MCF 10A (cell line): ENCODE measurements at regions of chr15 and their contacts with region 1.

Region 1: DNA sequence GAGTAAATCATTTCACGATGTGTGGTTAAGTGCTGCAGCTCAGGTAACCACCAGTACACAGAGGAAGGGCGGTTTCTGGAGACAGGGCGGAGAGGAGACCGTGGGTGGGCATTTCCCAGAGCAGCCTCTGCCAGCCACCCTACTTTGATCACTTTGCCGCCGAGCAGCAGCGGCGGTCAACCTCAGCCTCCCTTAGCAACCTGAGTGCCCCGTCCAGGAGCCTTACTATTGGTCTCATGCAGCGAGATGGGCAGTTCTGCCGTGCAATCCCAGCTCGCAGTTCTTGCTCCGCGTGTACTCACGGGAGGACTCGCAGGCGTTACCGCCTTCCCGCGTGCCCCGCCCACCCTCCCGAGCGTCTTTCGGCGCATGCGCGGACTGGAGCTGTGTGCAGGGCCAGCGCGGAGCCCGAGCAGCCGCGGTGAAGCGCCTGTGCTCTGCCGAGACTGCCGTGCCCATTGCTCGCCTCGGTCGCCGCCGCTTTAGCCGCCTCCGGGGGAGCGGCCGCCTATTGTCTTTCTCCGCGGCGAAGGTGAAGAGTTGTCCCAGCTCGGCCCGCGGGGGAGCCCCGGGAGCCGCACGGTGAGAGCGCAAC is at the start of gene AKAP13:
- DNase-seq: peak; percentile 99
- H3K4me3 Mint-ChIP-seq: peak within 1 kb of the TSS; percentile 79
- H3K27ac Mint-ChIP-seq: peak within 1 kb of the TSS; percentile 79
- H3K4me1 Mint-ChIP-seq: peaks cover 35% of the 10 kb centered on the region
- H3K27me3 Mint-ChIP-seq: no peaks in the 10 kb centered on the region
- CTCF ChIP-seq: no peak
- total RNA-seq, gene AKAP13: 65.7 and 92.9 TPM in 2 replicates

Region 2: DNA sequence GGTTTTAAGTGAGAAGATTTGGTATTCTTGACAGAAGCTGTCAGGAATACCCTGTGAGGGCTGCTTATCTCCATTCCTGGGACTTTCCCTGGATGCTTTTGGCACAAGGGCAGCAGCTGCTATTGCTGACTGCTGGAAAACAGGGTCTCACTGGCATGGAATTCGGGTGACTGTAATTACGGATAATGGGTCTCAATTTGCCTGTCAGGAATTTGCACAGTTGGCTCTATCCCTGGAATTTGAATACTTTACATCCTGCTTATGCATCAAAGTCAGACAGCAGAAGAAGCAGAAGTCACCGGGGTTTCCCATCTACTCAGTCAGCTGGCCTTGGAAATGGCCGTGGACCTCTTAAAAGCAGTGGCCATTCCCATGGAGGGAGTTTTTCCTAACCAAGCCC is 25.9 kb before region 1 on chr15:
- CTCF ChIA-PET with region 1: no interaction called
- POLR2A ChIA-PET with region 1: interaction called, 65 read pairs
- intact Hi-C with region 1: no loop called
- DNase-seq: no peak
- H3K4me3 Mint-ChIP-seq: no peak overlapping the region
- H3K27ac Mint-ChIP-seq: no peak overlapping the region
- H3K4me1 Mint-ChIP-seq: peaks cover 27% of the 10 kb centered on the region
- H3K27me3 Mint-ChIP-seq: no peaks in the 10 kb centered on the region
- CTCF ChIP-seq: no peak

Region 3: DNA sequence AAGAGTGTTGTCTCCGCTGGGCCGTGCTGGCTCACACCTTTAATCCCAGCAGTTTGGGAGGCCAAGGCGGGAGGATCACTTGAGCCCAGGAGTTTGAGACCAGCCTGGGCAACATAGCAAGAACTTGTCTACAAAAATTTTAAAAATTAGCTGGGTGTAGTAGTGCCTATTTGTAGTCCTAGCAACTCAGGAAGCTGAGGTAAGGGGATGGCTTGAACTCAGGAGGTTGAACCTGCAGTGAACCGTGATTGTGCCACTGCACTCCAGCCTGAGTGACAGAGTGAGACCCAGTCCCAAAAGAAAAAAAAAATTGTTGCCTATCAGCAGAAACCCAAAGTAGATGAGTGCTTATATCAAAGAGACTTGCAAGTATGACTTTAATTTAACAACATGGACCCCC is 12.6 kb before region 1 on chr15:
- CTCF ChIA-PET with region 1: interaction called, 3 read pairs
- POLR2A ChIA-PET with region 1: interaction called, 13 read pairs
- intact Hi-C with region 1: no loop called
- DNase-seq: no peak
- H3K4me3 Mint-ChIP-seq: no peak overlapping the region
- H3K27ac Mint-ChIP-seq: no peak overlapping the region
- H3K4me1 Mint-ChIP-seq: no peaks in the 10 kb centered on the region
- H3K27me3 Mint-ChIP-seq: no peaks in the 10 kb centered on the region
- CTCF ChIP-seq: no peak

Region 4: GRCh38 chr15:85406916-85407803 is 26.8 kb after region 1 on chr15:
- CTCF ChIA-PET with region 1: interaction called, 12 read pairs
- POLR2A ChIA-PET with region 1: interaction called, 94 read pairs
- intact Hi-C with region 1: no loop called
- DNase-seq: no peak
- H3K4me3 Mint-ChIP-seq: peak overlapping the region; percentile 21
- H3K27ac Mint-ChIP-seq: peak overlapping the region; percentile 18
- H3K4me1 Mint-ChIP-seq: peaks cover 59% of the 10 kb centered on the region
- H3K27me3 Mint-ChIP-seq: no peaks in the 10 kb centered on the region
- CTCF ChIP-seq: no peak

Region 5: DNA sequence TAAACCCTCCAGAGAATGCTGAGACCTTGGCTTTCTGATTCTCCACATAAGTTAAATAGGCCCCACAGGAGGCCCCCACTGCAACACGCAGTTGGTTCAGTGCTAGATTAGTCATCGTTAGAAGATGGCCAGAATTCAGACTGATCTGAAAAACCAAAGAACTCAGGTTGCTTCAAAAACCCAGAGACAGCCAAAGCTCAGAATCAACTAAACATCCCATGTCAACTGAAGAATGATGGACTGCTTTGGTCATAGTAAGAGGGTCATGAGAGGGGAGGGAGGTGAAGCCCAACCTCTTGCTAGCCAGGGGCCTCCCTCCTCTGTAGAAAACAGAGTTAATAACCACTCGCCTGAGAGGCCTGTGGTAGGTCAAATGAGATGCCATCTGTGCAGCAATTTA is 93.1 kb after region 1 on chr15:
- CTCF ChIA-PET with region 1: no interaction called
- POLR2A ChIA-PET with region 1: no interaction called
- intact Hi-C with region 1: no loop called
- DNase-seq: no peak
- H3K4me3 Mint-ChIP-seq: no peak overlapping the region
- H3K27ac Mint-ChIP-seq: no peak overlapping the region
- H3K4me1 Mint-ChIP-seq: peaks cover 41% of the 10 kb centered on the region
- H3K27me3 Mint-ChIP-seq: no peaks in the 10 kb centered on the region
- CTCF ChIP-seq: no peak

Region 6: GRCh38 chr15:85494048-85494793 is 113.9 kb after region 1 on chr15:
- CTCF ChIA-PET with region 1: no interaction called
- POLR2A ChIA-PET with region 1: interaction called, 3 read pairs
- intact Hi-C with region 1: loop called (anchors 5 kb)
- DNase-seq: peak; percentile 86
- H3K4me3 Mint-ChIP-seq: peak overlapping the region; percentile 25
- H3K27ac Mint-ChIP-seq: peak overlapping the region; percentile 66
- H3K4me1 Mint-ChIP-seq: peaks cover 40% of the 10 kb centered on the region
- H3K27me3 Mint-ChIP-seq: no peaks in the 10 kb centered on the region
- CTCF ChIP-seq: no peak